HCT116 (cell line): ENCODE measurements at regions of chr14 and their contacts with region 1.

Region 1: DNA sequence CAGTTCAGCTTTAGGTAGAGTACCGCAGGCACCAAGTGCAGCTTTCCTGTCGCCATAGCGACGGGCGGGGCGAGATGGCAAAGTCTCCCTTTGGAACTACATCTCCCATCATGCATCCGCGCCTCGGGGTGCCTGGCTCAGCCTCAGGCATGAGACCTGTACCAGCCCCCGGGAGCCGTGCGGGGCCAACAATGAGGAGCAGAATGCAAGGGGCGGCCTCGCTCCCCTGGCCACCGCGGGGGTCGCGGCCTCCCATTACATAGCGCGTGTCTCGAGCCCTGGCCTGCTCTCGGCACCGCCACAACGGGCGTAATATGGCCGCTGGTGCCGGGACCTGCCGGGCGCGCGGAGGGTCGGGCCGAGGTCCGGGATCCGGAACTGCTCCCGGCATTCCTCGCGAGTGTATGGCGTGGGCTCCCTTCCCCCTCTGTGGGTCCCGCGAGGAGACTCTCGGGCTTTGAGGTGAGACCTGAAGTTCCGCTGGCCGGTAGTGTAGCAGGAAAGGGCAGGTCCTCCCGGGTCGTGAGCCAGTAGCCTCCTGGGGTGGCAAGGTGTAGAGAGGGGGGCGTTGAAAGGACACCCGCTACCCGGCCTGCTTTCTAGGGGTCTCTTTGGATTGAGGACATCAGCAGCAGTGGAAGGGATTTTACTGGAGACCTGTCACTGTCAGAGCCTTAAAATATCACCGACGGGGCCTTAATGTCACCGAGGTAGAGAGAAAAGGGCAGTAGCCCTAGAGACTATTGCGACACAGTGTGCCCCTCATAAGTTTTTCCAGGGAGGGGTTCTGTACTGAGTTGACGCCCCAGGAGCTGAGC is at the start of gene THTPA:
- DNase-seq: peak; percentile 81
- ATAC-seq: peak; percentile 80
- H3K4me3 ChIP-seq: peak within 1 kb of the TSS; percentile 81 to 92
- H3K27ac ChIP-seq: peak within 1 kb of the TSS; percentile 91
- H3K4me1 ChIP-seq: peaks cover 5 to 27% of the 10 kb centered on the region in 2 experiments; a peak in 3 of 4 replicates
- H3K27me3 ChIP-seq: no peaks in the 10 kb centered on the region
- CTCF ChIP-seq: no peak
- POLR2A ChIP-seq: peak; percentile 55
- RAD21 ChIP-seq: no peak
- total RNA-seq, gene THTPA: 5.8 TPM

Region 2: GRCh38 chr14:23269193-23269592 is 286.9 kb before region 1 on chr14:
- CTCF ChIA-PET with region 1: no interaction called
- POLR2A ChIA-PET with region 1: no interaction called
- RAD21 ChIA-PET with region 1: no interaction called
- intact Hi-C with region 1: loop called (anchors 5 kb)
- DNase-seq: no peak
- ATAC-seq: no peak
- H3K4me3 ChIP-seq: no peak overlapping the region
- H3K27ac ChIP-seq: no peak overlapping the region
- H3K4me1 ChIP-seq: no peaks in the 10 kb centered on the region
- H3K27me3 ChIP-seq: no peaks in the 10 kb centered on the region; the same call in 1 of the 2 replicates
- CTCF ChIP-seq: no peak
- POLR2A ChIP-seq: no peak
- RAD21 ChIP-seq: no peak

Region 3: DNA sequence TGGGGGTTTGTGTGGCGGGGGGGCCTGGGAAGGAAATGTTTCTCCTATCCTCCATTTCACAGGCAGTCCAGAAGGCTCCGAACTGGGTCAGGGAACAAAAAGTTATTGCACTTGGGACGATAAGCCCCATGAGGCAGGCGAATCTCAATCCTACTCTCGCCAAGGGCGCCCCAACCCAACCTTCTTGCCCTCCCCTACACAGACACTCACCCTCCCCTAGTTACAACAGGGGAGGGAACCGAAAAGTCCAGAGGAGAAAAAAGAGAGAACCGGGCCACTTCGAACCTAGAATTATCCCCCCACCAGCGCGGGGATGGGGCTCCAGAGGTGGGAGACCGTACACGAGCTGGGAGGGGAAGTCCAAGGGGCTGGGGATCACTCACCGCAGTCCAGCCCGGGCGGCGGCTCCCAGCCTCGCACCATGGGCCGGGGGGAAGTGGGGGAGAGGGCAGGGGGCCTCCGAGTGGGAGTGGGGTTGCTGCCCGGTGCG is 270.5 kb before region 1 on chr14:
- CTCF ChIA-PET with region 1: no interaction called
- POLR2A ChIA-PET with region 1: no interaction called
- RAD21 ChIA-PET with region 1: no interaction called
- intact Hi-C with region 1: no loop called
- DNase-seq: no peak
- ATAC-seq: peak; percentile 48
- H3K4me3 ChIP-seq: peak overlapping the region; percentile 74 to 96
- H3K27ac ChIP-seq: peak overlapping the region; percentile 64
- H3K4me1 ChIP-seq: peaks cover 10 to 14% of the 10 kb centered on the region in 2 experiments
- H3K27me3 ChIP-seq: no peaks in the 10 kb centered on the region
- CTCF ChIP-seq: no peak
- POLR2A ChIP-seq: no peak
- RAD21 ChIP-seq: no peak

Region 4: GRCh38 chr14:23469127-23469905 is 86.8 kb before region 1 on chr14 and contains the start of gene NGDN:
- CTCF ChIA-PET with region 1: interaction called, 3 read pairs
- POLR2A ChIA-PET with region 1: no interaction called
- RAD21 ChIA-PET with region 1: no interaction called
- intact Hi-C with region 1: loop called (anchors 1 kb)
- DNase-seq: peak; percentile 100
- ATAC-seq: peak; percentile 96
- H3K4me3 ChIP-seq: peak within 1 kb of the TSS; percentile 74 to 90
- H3K27ac ChIP-seq: peak within 1 kb of the TSS; percentile 55
- H3K4me1 ChIP-seq: peaks cover 7 to 19% of the 10 kb centered on the region in 2 experiments
- H3K27me3 ChIP-seq: no peaks in the 10 kb centered on the region
- CTCF ChIP-seq: peak in 2 of 3 experiments; percentile 68 to 77; a peak in 5 of 6 replicates
- POLR2A ChIP-seq: peak; percentile 35
- RAD21 ChIP-seq: no peak
- total RNA-seq, gene NGDN: 42.0 TPM

Region 5: GRCh38 chr14:23478111-23478759 is 77.9 kb before region 1 on chr14:
- CTCF ChIA-PET with region 1: interaction called, 69 read pairs
- POLR2A ChIA-PET with region 1: interaction called, 3 read pairs
- RAD21 ChIA-PET with region 1: interaction called in 1 of 2 experiments, 6 read pairs
- intact Hi-C with region 1: no loop called
- DNase-seq: peak; percentile 51
- ATAC-seq: peak; percentile 71
- H3K4me3 ChIP-seq: no peak overlapping the region
- H3K27ac ChIP-seq: no peak overlapping the region
- H3K4me1 ChIP-seq: no peaks in the 10 kb centered on the region
- H3K27me3 ChIP-seq: no peaks in the 10 kb centered on the region
- CTCF ChIP-seq: peak; percentile 63 to 80 (median 66)
- POLR2A ChIP-seq: no peak
- RAD21 ChIP-seq: peak; percentile 76

Region 6: DNA sequence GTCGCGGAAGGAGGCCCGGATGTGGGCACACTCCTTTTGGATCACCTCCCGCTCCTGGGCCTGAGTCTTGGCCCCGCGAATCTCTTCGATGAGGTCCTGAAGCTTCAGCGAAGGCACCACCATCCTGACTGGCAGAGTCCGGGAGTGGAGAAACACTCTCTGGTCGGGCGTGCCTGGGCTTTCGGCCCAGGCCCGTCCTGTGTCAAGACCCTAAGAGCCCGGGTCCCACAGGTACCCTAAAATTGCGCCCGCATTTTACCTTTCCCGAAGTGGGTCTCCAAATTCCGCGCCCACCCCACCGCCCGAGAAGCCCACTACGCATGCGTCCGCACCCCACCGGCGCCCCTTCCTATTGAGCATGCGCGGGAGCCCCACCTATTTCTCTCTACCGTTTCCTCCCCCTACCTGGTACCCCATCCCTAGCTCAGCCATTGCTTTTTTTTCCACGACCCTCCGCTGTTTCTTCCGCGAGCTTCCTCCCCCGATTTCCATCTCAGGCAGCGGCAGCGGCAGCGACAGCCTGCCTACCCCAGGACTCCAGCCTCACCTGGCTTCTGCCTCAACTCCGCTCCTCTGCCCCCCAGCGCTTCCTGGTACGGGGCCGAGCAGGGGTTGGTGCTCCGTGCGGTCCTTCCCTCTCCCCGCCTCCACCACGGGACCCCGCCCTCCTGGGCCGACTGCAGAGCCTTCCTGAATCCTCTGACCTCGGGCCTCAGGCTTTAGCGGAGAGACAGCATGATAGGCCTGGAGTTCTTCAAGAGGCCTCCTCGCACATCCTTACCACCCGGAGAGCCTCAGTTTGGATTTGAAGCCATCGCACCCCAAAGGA is 11.3 kb after region 1 on chr14 and contains the start of gene AP1G2:
- CTCF ChIA-PET with region 1: interaction called, 21 read pairs
- POLR2A ChIA-PET with region 1: interaction called, 3 read pairs
- RAD21 ChIA-PET with region 1: no interaction called
- intact Hi-C with region 1: no loop called
- DNase-seq: peak; percentile 73
- ATAC-seq: peak; percentile 89
- H3K4me3 ChIP-seq: peak within 1 kb of the TSS; percentile 85 to 88
- H3K27ac ChIP-seq: peak within 1 kb of the TSS; percentile 86
- H3K4me1 ChIP-seq: peaks cover 26 to 34% of the 10 kb centered on the region in 2 experiments
- H3K27me3 ChIP-seq: no peaks in the 10 kb centered on the region
- CTCF ChIP-seq: no peak
- POLR2A ChIP-seq: peak; percentile 84
- RAD21 ChIP-seq: no peak
- total RNA-seq, gene AP1G2: 155 TPM